ENCODE measurements at regions of chr5 and their contacts with region 1.

Region 1: DNA sequence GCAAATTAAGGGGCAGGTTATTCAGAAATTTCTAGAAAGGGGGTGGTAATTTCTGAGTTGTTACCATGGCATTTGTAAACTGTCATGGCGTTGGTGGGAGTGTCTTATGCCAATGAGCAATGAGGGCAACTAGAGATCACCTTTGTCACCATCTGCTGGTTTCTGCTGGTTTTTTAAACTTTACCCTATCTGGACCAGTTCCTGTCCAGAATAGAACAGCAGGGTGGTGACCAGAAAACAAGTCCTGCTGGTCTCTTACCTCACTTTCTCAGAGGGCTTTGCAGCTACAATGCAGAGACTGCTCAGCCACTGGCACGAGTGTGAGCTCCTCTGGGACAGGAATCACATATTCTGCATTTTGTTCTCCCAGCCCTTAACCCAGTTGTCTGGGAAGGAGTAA is 51.4 kb downstream of the FAM114A2 start:
- DNase-seq: no peak
- H3K4me3 Mint-ChIP-seq: no peak overlapping the region
- H3K27ac Mint-ChIP-seq: no peak overlapping the region
- H3K4me1 Mint-ChIP-seq: no peaks in the 10 kb centered on the region
- H3K27me3 Mint-ChIP-seq: no peaks in the 10 kb centered on the region
- CTCF ChIP-seq: no peak

Region 2: DNA sequence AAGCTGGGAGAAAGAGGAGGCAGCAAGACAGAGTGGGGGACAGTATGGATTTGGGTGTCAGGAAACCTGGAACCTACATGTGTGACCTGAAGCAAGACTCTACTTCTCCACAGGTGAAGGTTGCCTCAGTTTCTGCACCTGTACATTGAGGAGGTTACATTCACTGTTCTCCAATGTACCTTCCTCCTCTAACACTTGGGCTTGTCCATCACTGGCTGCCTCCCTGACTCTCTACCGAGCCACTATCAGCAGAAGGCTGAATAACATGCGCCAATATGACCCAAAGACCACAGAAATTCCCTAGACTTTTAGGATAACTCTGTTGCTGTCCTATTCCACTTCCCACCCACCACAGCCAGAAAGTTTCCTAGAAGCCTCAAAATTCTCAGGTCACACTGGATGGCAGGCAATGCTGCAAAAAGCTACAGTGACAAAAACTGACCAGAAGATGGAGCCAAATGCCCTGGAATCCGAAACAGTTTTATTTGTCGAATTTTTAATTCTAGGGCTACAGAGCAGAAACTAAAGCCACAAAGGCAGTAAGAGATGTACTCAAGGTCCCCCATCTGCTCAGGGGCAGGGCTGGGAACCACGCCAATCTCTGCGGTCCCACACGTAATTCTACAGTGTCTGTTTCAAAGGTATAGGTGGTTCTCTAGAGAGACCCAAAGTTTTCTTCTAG is 13.0 kb before region 1 on chr5:
- CTCF ChIA-PET with region 1: interaction called, 134 read pairs
- POLR2A ChIA-PET with region 1: no interaction called
- intact Hi-C with region 1: no loop called
- DNase-seq: peak; percentile 68
- H3K4me3 Mint-ChIP-seq: no peak overlapping the region
- H3K27ac Mint-ChIP-seq: no peak overlapping the region
- H3K4me1 Mint-ChIP-seq: no peaks in the 10 kb centered on the region
- H3K27me3 Mint-ChIP-seq: peaks cover 21% of the 10 kb centered on the region
- CTCF ChIP-seq: peak; percentile 94

Measured in MCF 10A (cell line).